HCT116 (cell line): ENCODE measurements at regions of chr21 and their contacts with region 1.

Region 1: DNA sequence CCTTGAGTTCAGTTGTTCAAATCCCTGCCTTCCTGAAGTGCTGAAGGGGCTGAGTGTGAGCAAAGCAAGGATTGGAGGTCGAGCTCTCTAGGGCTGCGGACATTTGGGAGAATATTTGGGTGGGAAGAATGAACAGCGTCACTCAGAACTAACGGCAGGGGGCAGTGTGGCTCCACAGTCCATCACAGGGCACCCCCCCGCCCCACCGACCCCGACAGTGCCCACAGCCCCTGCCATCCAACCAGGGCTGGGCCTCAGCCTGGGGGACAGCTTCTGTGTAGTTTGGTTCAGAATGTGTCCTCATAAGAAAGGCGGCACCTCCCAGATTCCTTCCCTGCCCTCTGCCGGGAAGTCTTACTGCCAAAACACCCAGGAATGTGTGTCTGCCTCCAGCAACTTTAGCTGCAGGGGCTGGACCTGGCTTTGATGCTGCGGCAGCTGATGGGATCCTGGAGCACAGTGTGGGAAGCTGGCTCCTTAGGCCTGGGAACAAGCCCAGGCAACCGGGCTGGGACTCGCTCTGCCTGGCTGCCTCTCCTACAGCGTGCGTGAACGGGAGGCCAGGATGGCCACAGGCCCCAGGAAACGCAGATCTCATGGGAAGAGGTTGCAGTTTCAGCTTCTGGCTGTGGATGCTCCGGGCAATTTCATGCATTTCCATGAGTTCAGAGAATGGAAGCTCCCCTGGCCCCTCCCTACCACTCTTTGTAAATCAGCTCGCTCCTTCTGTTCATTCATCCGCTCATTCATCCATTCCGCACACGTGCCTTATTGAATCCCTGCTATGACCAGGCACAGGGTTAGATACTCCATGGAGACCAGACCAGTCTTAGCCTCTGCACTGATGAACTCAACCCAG is 104.9 kb upstream of the TMPRSS2 start:
- DNase-seq: no peak
- ATAC-seq: peak; percentile 87
- H3K4me3 ChIP-seq: no peak overlapping the region; a peak in 1 of 4 replicates
- H3K27ac ChIP-seq: no peak overlapping the region
- H3K4me1 ChIP-seq: peaks cover 10 to 12% of the 10 kb centered on the region in 2 experiments; a peak in 3 of 4 replicates
- H3K27me3 ChIP-seq: peaks cover 6% of the 10 kb centered on the region; the same call in 1 of the 2 replicates
- CTCF ChIP-seq: peak; percentile 68 to 72 (median 68)
- POLR2A ChIP-seq: no peak
- RAD21 ChIP-seq: peak; percentile 83

Region 2: DNA sequence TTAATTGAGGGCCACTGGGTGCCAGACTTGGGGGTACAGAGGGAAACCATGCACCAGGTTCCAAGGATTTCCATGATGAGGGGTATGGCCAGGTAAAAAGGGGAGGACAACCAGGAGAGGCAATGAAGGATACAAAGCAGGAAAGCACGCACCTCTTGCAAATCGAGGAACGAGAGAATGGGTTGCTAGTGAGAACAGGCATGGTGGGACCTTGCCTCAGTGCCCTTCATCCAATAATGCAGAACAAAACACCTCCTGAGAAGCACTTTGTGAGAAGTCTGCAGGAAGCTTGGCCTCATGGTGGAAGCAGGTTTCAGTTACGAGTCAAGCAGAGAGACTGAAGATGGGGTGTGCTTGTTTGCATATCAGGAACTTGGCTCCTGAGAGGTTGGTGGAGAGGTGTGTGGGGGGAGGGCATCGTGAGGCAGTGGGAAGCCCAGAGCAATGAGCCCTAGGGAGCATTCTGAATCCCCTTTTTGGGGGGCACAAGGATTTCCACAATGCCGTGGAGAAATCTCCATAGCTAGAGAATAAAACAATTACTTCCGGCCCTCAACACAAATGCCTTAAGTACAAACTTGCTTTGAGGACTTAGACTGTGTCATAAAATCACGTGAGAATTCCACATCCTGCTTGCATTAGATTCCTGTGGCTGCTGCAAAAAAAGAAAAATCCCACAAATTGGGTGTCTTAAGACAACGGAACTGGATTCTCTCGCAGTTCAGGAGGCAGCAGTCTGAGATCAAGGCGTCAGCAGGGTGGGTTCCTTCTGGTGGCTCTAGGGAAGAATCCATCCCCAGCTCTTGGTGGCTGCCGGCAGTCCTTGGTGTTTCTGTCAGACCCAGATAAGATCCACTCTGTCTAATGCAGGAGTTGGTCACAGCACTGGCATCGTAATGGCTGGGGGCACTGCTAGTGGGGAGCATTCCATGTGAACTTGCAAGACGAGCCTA is 499.9 kb before region 1 on chr21:
- CTCF ChIA-PET with region 1: no interaction called
- POLR2A ChIA-PET with region 1: no interaction called
- RAD21 ChIA-PET with region 1: no interaction called
- intact Hi-C with region 1: no loop called
- DNase-seq: no peak
- ATAC-seq: no peak
- H3K4me3 ChIP-seq: no peak overlapping the region
- H3K27ac ChIP-seq: no peak overlapping the region
- H3K4me1 ChIP-seq: no peaks in the 10 kb centered on the region
- H3K27me3 ChIP-seq: peaks cover 24% of the 10 kb centered on the region
- CTCF ChIP-seq: no peak
- POLR2A ChIP-seq: no peak
- RAD21 ChIP-seq: no peak

Region 3: GRCh38 chr21:41338455-41338854 is 274.4 kb before region 1 on chr21:
- CTCF ChIA-PET with region 1: no interaction called
- POLR2A ChIA-PET with region 1: no interaction called
- RAD21 ChIA-PET with region 1: no interaction called
- intact Hi-C with region 1: no loop called
- DNase-seq: no peak
- ATAC-seq: no peak
- H3K4me3 ChIP-seq: no peak overlapping the region
- H3K27ac ChIP-seq: no peak overlapping the region
- H3K4me1 ChIP-seq: no peaks in the 10 kb centered on the region
- H3K27me3 ChIP-seq: no peaks in the 10 kb centered on the region
- CTCF ChIP-seq: no peak
- POLR2A ChIP-seq: no peak
- RAD21 ChIP-seq: no peak

Region 4: GRCh38 chr21:41630249-41630648 is 17.3 kb after region 1 on chr21:
- CTCF ChIA-PET with region 1: interaction called, 18 read pairs
- POLR2A ChIA-PET with region 1: no interaction called
- RAD21 ChIA-PET with region 1: no interaction called
- intact Hi-C with region 1: no loop called
- DNase-seq: peak; percentile 86
- ATAC-seq: peak; percentile 85
- H3K4me3 ChIP-seq: peak overlapping the region in 1 of 2 experiments; percentile 23; a peak in 2 of 4 replicates
- H3K27ac ChIP-seq: 0 out of 2 replicates have a peak overlapping the region, but pooled peaks have one; percentile 29
- H3K4me1 ChIP-seq: peaks cover 27 to 44% of the 10 kb centered on the region in 2 experiments
- H3K27me3 ChIP-seq: peaks cover 11% of the 10 kb centered on the region
- CTCF ChIP-seq: no peak
- POLR2A ChIP-seq: no peak
- RAD21 ChIP-seq: no peak

Region 5: GRCh38 chr21:41777951-41778874 is 165.3 kb after region 1 on chr21:
- CTCF ChIA-PET with region 1: interaction called, 73 read pairs
- POLR2A ChIA-PET with region 1: interaction called, 6 read pairs
- RAD21 ChIA-PET with region 1: interaction called, 14 to 24 read pairs
- intact Hi-C with region 1: loop called (anchors 1 kb)
- DNase-seq: peak; percentile 84
- ATAC-seq: peak; percentile 92
- H3K4me3 ChIP-seq: peak overlapping the region in 1 of 2 experiments; percentile 18; a peak in 1 of 4 replicates
- H3K27ac ChIP-seq: no peak overlapping the region; the same call in 1 of the 2 replicates
- H3K4me1 ChIP-seq: peaks cover 10 to 25% of the 10 kb centered on the region in 2 experiments
- H3K27me3 ChIP-seq: peaks cover 53% of the 10 kb centered on the region
- CTCF ChIP-seq: peak; percentile 76 to 91 (median 86)
- POLR2A ChIP-seq: no peak
- RAD21 ChIP-seq: peak; percentile 84

Region 6: GRCh38 chr21:41816220-41817165 is 203.6 kb after region 1 on chr21:
- CTCF ChIA-PET with region 1: interaction called, 39 read pairs
- POLR2A ChIA-PET with region 1: no interaction called
- RAD21 ChIA-PET with region 1: interaction called in 1 of 2 experiments, 6 read pairs
- intact Hi-C with region 1: loop called (anchors 1 kb)
- DNase-seq: no peak
- ATAC-seq: peak; percentile 87
- H3K4me3 ChIP-seq: no peak overlapping the region
- H3K27ac ChIP-seq: no peak overlapping the region
- H3K4me1 ChIP-seq: no peaks in the 10 kb centered on the region
- H3K27me3 ChIP-seq: no peaks in the 10 kb centered on the region
- CTCF ChIP-seq: peak; percentile 52 to 77 (median 76); a peak in 5 of 6 replicates
- POLR2A ChIP-seq: no peak
- RAD21 ChIP-seq: peak; percentile 74

Region 7: GRCh38 chr21:42117229-42117966 is 504.5 kb after region 1 on chr21:
- CTCF ChIA-PET with region 1: interaction called, 15 read pairs
- POLR2A ChIA-PET with region 1: no interaction called
- RAD21 ChIA-PET with region 1: interaction called, 4 read pairs
- intact Hi-C with region 1: loop called (anchors 1 kb)
- DNase-seq: peak; percentile 54
- ATAC-seq: peak; percentile 95
- H3K4me3 ChIP-seq: peak overlapping the region; percentile 26 to 28
- H3K27ac ChIP-seq: no peak overlapping the region
- H3K4me1 ChIP-seq: peaks cover 0 to 5% of the 10 kb centered on the region in 2 experiments; a peak in 1 of 4 replicates
- H3K27me3 ChIP-seq: peaks cover 21% of the 10 kb centered on the region; the same call in 1 of the 2 replicates
- CTCF ChIP-seq: peak; percentile 72 to 91 (median 91); a peak in 5 of 6 replicates
- POLR2A ChIP-seq: no peak
- RAD21 ChIP-seq: peak; percentile 87